Breast epithelium (tissue), 4 donors: ENCODE measurements at regions of chr20 and their contacts with region 1.

Region 1: GRCh38 chr20:46872328-46873211 is 22.1 kb upstream of the EYA2 start:
- DNase-seq: no peak
- H3K4me3 ChIP-seq: peak overlapping the region in 2 of 3 donors; percentile 21 to 50
- H3K27ac ChIP-seq: no peak overlapping the region
- H3K4me1 ChIP-seq: no peaks in the 10 kb centered on the region
- H3K27me3 ChIP-seq: no peaks in the 10 kb centered on the region
- CTCF ChIP-seq: no peak
- POLR2A ChIP-seq: no peak

Region 2: DNA sequence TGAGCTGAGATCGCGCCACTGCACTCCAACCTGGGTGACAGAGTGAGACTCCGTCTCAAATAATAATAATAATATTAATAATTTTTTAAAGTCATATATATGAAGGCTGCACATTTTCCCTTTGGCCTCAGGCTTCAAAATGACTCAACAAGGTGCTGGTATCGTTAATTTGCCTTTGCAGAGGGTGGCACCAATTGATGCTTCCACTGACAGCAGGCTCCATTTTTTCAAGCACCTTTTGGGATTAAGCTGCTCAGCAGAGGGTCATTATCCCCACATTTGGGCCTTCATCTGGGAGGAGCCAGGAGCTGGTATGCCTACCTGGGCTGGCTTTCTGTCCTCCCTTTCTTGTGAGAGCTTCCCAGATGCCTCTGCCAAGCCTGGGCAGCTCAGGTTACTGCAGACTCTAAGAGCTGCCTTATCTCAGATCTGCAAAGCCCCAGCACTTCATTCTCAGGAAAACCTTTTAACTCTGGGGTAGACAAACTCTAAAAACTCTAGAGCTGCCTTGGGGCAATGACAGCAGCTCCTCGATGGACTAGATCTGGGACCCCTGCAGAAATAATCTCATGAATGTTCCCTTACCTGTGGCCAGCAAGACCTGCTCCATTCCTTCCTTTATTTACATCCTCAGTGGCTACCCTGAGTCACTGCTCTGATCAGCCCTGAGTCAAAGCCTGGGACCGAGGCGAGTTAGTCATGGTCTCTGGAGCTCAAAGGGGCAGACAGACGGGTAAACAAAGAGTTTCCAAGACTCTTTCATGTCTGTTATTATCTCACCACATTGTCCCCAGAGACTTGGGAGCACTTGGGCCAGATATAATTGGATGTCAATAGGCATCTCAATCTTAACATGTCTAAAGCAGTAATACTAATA is 58.0 kb before region 1 on chr20:
- intact Hi-C with region 1: loop called (anchors 2 kb)
- DNase-seq: no peak
- H3K4me3 ChIP-seq: no peak overlapping the region
- H3K27ac ChIP-seq: no peak overlapping the region
- H3K4me1 ChIP-seq: no peaks in the 10 kb centered on the region
- H3K27me3 ChIP-seq: peaks cover 3 to 5% of the 10 kb centered on the region in 2 donors
- CTCF ChIP-seq: no peak
- POLR2A ChIP-seq: no peak

Region 3: DNA sequence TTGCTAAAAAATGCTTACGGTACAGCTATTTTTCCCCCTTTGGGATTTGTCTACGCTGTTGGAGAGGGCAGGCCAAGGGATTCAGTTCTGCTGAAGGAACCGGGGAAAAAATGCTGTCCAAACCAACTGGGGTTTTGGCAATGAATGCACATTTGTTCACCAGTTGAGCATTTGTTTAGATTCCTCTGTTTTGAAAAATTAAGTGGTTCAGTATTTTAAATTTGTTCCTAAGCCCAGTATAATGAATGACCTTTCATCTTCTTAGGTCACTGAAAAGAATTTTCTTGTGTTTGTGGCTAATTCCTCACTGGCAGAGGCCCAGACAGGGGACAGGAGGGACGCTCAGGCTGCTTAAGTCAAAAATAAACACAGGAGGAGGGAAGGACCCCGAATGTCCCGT is 11.3 kb after region 1 on chr20:
- intact Hi-C with region 1: no loop called
- DNase-seq: no peak
- H3K4me3 ChIP-seq: no peak overlapping the region
- H3K27ac ChIP-seq: peak overlapping the region in 1 of 2 donors; percentile 64
- H3K4me1 ChIP-seq: no peaks in the 10 kb centered on the region
- H3K27me3 ChIP-seq: no peaks in the 10 kb centered on the region
- CTCF ChIP-seq: no peak
- POLR2A ChIP-seq: no peak